ENCODE measurements at regions of chr5 and their contacts with region 1.

Region 1: DNA sequence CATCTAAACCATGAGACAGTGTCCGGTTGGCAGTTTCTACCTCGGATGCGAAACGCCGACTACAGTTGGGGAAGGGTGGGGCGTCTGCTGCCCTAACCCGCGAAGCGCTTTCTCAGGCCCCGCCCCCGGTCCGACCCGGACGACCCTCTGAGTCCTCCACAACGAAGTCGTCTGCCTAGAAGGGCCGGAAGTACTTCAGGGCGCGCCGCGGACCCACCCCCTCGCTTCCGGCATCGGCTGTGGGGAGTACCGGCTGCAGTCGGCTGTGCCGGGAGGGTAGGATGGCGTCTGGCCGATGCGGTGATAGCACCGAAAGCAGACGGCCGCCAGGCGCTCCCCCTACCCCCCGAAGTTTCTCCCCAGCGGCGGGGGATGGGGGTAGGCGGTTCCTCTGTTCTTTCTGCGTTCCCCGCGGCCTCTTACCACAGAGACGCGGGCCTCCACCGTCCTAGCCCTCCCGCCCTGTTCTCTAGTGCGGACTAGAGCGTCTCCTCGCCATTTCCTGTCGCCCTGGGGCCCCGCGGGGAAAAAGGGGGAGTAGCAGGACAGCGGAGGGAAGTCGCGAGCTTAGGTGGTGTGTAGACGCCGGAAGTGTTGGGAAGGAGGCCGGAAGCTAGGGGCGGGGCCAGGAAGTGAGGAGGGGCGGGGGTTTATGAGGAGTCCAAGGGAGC is at the start of gene TRIM41:
- DNase-seq: peak; percentile 98 to 99
- ATAC-seq: peak; percentile 82
- H3K4me3 ChIP-seq: peak within 1 kb of the TSS; percentile 76 to 95 (median 78)
- H3K27ac ChIP-seq: peak within 1 kb of the TSS; percentile 90 to 97 (median 92)
- H3K4me1 ChIP-seq: peaks cover 23 to 26% of the 10 kb centered on the region in 2 donors
- H3K27me3 ChIP-seq: no peaks in the 10 kb centered on the region
- CTCF ChIP-seq: peak in 1 of 5 experiments; percentile 3
- POLR2A ChIP-seq: peak; percentile 88 to 95
- total RNA-seq, gene TRIM41: 15.6 to 23.5 (median 21.6) TPM

Region 2: GRCh38 chr5:181020688-181021087 is 202.5 kb before region 1 on chr5:
- in situ Hi-C with region 1: no loop called
- intact Hi-C with region 1: no loop called
- DNase-seq: no peak
- ATAC-seq: no peak
- H3K4me3 ChIP-seq: no peak overlapping the region
- H3K27ac ChIP-seq: no peak overlapping the region
- H3K4me1 ChIP-seq: no peaks in the 10 kb centered on the region
- H3K27me3 ChIP-seq: peaks cover 0 to 3% (median 0%) of the 10 kb centered on the region in 3 donors
- CTCF ChIP-seq: no peak
- POLR2A ChIP-seq: no peak

Region 3: DNA sequence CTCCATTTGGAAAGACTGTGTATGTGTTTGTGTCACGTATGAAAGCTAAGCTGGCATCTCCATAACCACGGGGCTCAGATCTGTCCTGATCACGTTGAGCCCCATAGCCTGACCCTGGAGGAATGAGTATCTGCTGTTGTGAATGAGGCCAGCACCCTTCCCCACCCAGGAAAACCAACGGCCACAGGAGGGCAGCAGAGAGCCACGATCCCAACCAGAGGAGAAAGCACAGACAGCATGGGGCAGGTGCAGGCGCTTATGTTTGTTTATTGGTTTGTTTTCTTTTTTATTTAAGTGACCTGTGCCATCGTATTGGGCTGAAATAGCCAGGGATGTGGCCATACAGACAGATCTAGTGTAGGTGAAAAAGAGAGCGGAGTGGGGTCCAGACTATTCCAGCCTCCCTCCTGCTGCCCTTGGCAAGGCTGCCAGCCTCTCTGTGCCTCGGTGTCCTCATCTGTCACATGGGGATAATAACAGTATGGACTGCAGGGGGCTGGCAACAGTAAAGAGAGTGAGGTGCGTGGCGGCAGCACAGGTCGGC is 63.8 kb before region 1 on chr5:
- in situ Hi-C with region 1: no loop called
- intact Hi-C with region 1: no loop called
- DNase-seq: peak; percentile 57 to 74
- ATAC-seq: peak; percentile 93 to 95
- H3K4me3 ChIP-seq: no peak overlapping the region
- H3K27ac ChIP-seq: peak overlapping the region in 1 of 4 donors; percentile 72
- H3K4me1 ChIP-seq: no peaks in the 10 kb centered on the region
- H3K27me3 ChIP-seq: peaks cover 0 to 2% (median 1%) of the 10 kb centered on the region in 3 donors
- CTCF ChIP-seq: peak; percentile 60 to 91 (median 81)
- POLR2A ChIP-seq: no peak

Region 4: GRCh38 chr5:181207214-181208107 is 15.7 kb before region 1 on chr5:
- in situ Hi-C with region 1: no loop called
- intact Hi-C with region 1: loop called (anchors 1 kb)
- DNase-seq: peak in 1 of 2 donors; percentile 65
- ATAC-seq: peak; percentile 12 to 15
- H3K4me3 ChIP-seq: peak overlapping the region; percentile 69 to 86 (median 80)
- H3K27ac ChIP-seq: peak overlapping the region; percentile 95 to 99 (median 97)
- H3K4me1 ChIP-seq: peaks cover 30 to 38% of the 10 kb centered on the region in 2 donors
- H3K27me3 ChIP-seq: no peaks in the 10 kb centered on the region
- CTCF ChIP-seq: no peak
- POLR2A ChIP-seq: peak in 1 of 2 donors; percentile 18